ENCODE measurements at regions of chr6 and their contacts with region 1.

Region 1: DNA sequence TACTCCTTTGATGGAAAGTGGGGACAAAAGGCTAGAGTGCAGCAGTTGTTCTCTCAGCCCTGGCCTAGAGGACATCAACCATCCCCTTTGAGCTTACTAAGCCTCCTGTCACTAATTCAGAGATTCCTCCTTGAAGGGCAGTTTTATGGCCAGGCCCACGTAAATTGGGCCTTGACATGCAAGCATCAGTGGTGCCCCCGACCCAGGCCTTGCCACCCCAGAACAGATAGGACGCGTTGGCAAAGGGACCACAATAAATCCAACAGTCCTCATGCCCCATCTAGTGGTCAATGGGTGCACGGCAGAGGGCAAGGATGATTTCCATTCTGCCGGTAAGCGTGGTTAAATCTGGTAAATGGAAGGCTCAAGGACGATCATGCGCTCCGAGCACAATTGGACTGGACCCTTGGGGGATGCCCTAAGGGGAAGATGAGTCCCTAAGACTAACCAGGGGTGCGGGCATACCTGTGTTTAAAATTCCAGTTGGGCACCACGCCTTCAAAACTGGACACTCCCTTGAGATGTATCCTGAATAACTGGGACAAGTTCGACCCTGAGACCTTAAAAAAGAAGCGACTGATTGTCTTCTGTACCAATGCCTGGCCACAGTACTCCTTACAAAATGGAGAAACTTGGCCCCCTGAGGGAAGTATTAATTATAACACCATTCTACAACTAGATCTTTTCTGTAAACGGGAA is 32.6 kb downstream of the CEP85L start:
- DNase-seq: peak; percentile 58 to 60
- ATAC-seq: peak; percentile 50 to 83 (median 81)
- H3K4me3 ChIP-seq: no peak overlapping the region
- H3K27ac ChIP-seq: no peak overlapping the region
- H3K4me1 ChIP-seq: peaks cover 0 to 45% (median 21%) of the 10 kb centered on the region in 9 donors
- H3K27me3 ChIP-seq: no peaks in the 10 kb centered on the region
- CTCF ChIP-seq: peak; percentile 68 to 90 (median 88)

Region 2: DNA sequence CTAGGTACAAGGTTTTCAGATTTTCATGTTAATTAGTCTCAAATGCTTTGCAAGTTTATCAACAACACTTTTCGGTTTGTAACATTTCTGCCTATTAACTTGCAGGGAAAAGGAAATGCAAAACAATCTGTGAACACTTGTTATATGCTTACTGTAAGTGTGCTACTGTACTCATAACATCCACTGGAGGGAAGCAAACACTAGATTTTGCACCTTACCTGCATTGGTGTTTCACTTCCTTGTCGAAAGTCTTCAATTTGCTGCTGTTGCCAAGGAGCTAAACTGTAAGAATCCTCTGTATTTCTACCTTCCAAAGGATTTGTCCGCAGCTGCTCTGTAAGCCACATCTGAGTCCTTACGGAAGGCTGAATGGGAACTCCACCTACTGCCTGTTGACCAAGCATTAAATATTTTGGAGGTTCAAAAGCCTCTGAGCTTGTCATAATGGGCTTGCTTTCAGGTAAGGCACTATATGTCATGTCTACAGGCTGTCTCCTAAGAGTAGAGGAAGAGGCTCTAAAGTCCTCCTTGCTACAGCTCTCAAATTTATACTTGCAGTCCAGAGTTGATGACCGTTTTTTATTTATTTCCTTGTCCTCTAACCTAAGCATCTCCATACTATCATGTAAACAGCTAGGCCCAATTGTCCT is 53.4 kb before region 1 on chr6:
- intact Hi-C with region 1: loop called in 3 of 10 experiments (anchors 5 to 10 kb)
- DNase-seq: no peak
- ATAC-seq: peak in 5 of 8 donors; percentile 34 to 52 (median 37)
- H3K4me3 ChIP-seq: no peak overlapping the region
- H3K27ac ChIP-seq: no peak overlapping the region
- H3K4me1 ChIP-seq: peaks cover 0 to 16% (median 8%) of the 10 kb centered on the region in 9 donors
- H3K27me3 ChIP-seq: no peaks in the 10 kb centered on the region
- CTCF ChIP-seq: peak; percentile 4 to 56 (median 33)

Region 3: DNA sequence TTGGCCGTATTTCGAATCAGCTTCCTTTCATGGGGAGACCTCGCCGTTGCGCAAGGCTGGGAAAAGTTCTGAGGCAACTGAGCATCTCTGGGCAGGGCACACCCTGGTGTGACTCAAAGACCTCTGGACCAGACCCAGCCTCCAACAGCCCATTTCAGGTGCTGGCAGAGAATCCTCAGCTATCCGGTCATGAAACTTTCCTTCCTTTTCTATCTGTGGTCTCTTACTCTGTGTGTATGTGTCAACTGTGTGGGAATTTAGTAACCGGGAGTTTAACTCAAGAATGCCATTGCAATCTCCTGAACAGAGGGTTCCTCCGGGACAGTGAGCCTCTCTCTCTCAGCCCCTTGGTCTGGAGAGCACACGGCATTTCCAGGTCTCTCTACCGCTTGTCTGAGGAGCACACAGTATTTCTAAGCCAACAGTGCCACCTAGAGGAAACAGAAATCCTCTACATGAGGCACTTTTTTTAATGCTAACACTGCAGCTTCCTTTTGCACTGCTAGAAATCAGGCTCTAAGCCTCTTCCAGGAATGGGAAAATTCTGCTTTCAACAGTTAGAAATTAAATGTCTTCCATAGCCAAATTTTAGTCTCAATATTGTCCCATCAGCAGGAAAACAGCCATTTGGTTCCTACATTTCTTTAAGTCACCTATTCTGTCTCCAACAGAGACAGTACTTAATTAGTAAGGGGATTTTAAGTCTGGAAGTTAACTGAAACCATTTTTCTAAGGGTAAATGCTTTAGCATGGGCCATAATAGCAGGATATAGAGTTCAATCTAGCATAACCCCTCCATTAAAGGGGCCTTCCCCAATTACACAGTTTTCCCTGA is 38.0 kb before region 1 on chr6:
- intact Hi-C with region 1: loop called in 1 of 10 experiments (anchors 1 kb)
- DNase-seq: peak in 1 of 2 donors; percentile 43
- ATAC-seq: peak; percentile 85 to 92 (median 91)
- H3K4me3 ChIP-seq: no peak overlapping the region
- H3K27ac ChIP-seq: peak overlapping the region in 1 of 10 donors; percentile 51
- H3K4me1 ChIP-seq: peaks cover 0 to 29% (median 7%) of the 10 kb centered on the region in 9 donors
- H3K27me3 ChIP-seq: no peaks in the 10 kb centered on the region
- CTCF ChIP-seq: peak; percentile 48 to 80 (median 71)

Region 4: DNA sequence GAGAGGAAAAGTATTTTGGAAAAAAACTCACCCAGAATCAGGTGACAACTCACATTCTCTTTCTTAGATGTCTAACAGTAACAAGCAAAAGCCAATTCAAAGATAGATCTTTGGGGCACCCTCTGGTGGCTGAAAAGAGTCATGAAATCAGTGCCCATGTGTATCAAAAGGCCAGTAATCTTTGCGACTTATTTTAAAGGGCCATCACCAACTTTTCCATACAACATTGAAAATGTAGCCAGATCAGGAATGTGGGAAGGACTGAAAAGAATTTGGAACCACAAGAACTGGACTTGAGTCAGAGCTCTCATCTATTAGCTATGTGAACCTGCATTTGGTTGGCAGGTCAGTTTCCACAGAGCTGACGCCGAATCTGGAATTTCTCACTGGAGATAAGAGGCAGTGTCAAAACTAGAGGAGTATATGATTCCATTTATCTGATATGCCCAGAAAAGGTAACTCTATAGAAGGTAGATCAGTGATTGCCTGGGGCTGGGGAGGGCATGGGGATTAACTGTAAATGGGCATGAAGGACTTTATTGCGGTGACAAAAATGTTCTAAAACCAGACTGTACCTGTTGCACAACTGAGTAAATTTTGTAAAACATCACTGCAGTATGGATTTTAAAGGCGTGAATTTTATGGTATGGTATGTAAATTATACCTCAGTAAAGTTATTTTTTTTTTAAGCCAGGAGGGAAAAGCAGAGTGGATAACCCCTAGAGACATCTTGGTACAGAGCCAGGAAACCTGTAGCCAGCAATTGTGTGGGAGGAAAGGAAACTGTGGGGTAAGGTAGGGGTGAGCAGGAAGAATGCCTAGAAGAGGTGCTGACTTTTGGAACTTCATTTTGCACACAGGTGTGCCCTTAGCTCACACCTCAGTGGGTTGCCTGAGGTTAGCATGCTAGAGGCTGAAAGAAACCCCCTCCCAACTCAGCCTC is 158.1 kb after region 1 on chr6:
- intact Hi-C with region 1: loop called in 2 of 10 experiments (anchors 10 kb)
- DNase-seq: peak in 1 of 2 donors; percentile 72
- ATAC-seq: peak in 7 of 8 donors; percentile 59 to 92 (median 73)
- H3K4me3 ChIP-seq: peak overlapping the region in 4 of 10 donors; percentile 20 to 29 (median 28)
- H3K27ac ChIP-seq: no peak overlapping the region
- H3K4me1 ChIP-seq: peaks cover 0 to 26% (median 13%) of the 10 kb centered on the region in 9 donors
- H3K27me3 ChIP-seq: no peaks in the 10 kb centered on the region
- CTCF ChIP-seq: peak; percentile 55 to 87 (median 78)

Region 5: GRCh38 chr6:118800394-118801071 is 181.7 kb after region 1 on chr6:
- intact Hi-C with region 1: no loop called
- DNase-seq: peak; percentile 25 to 88
- ATAC-seq: peak; percentile 58 to 94 (median 88)
- H3K4me3 ChIP-seq: peak overlapping the region in 5 of 10 donors; percentile 17 to 25 (median 18)
- H3K27ac ChIP-seq: no peak overlapping the region
- H3K4me1 ChIP-seq: peaks cover 3 to 11% (median 9%) of the 10 kb centered on the region in 9 donors
- H3K27me3 ChIP-seq: no peaks in the 10 kb centered on the region
- CTCF ChIP-seq: peak; percentile 65 to 93 (median 88)